Natural killer cell (primary cell): ENCODE measurements at regions of chrX and their contacts with region 1.

Region 1: GRCh38 chrX:65985922-65986588 is 53.8 kb downstream of the VSIG4 start:
- DNase-seq: peak; percentile 30 to 78
- ATAC-seq: peak; percentile 92 to 98 (median 96)
- H3K4me3 ChIP-seq: no peak overlapping the region
- H3K4me3 Mint-ChIP-seq: peak overlapping the region; percentile 9
- H3K27ac ChIP-seq: peak overlapping the region; percentile 80
- H3K27ac Mint-ChIP-seq: peak overlapping the region; percentile 87 to 88
- H3K4me1 ChIP-seq: peaks cover 12% of the 10 kb centered on the region
- H3K4me1 Mint-ChIP-seq: peaks cover 23 to 27% of the 10 kb centered on the region in 2 donors
- H3K27me3 ChIP-seq: no peaks in the 10 kb centered on the region
- H3K27me3 Mint-ChIP-seq: no peaks in the 10 kb centered on the region
- CTCF ChIP-seq: peak; percentile 35

Region 2: DNA sequence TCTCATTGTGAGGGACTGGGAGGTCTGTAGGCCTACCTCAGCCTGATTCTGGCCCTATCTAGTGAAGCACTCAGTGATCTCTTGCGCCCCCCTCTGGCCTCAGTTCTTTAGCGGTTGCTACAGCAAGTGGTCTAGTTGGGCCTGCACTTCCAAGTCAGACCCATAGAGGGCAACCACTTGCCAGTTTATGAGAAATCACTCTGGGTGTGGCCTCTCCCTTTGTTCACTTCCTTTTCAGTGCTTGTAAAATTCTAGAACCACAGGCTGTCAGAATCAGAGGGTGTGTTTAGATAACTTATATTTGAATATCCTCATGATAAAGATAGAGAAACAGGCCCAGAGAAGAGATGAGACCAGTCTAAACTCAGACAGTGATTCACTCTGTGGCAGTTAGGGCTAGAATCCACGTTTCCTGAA is 390.6 kb before region 1 on chrX:
- intact Hi-C with region 1: loop called (anchors 1 kb)
- DNase-seq: peak; percentile 82 to 94
- ATAC-seq: peak; percentile 80 to 97 (median 88)
- H3K4me3 ChIP-seq: no peak overlapping the region
- H3K4me3 Mint-ChIP-seq: peak overlapping the region; percentile 77
- H3K27ac ChIP-seq: peak overlapping the region; percentile 97
- H3K27ac Mint-ChIP-seq: peak overlapping the region; percentile 83 to 85
- H3K4me1 ChIP-seq: peaks cover 47% of the 10 kb centered on the region
- H3K4me1 Mint-ChIP-seq: peaks cover 37 to 48% of the 10 kb centered on the region in 2 donors
- H3K27me3 ChIP-seq: no peaks in the 10 kb centered on the region
- H3K27me3 Mint-ChIP-seq: no peaks in the 10 kb centered on the region
- CTCF ChIP-seq: peak; percentile 86

Region 3: DNA sequence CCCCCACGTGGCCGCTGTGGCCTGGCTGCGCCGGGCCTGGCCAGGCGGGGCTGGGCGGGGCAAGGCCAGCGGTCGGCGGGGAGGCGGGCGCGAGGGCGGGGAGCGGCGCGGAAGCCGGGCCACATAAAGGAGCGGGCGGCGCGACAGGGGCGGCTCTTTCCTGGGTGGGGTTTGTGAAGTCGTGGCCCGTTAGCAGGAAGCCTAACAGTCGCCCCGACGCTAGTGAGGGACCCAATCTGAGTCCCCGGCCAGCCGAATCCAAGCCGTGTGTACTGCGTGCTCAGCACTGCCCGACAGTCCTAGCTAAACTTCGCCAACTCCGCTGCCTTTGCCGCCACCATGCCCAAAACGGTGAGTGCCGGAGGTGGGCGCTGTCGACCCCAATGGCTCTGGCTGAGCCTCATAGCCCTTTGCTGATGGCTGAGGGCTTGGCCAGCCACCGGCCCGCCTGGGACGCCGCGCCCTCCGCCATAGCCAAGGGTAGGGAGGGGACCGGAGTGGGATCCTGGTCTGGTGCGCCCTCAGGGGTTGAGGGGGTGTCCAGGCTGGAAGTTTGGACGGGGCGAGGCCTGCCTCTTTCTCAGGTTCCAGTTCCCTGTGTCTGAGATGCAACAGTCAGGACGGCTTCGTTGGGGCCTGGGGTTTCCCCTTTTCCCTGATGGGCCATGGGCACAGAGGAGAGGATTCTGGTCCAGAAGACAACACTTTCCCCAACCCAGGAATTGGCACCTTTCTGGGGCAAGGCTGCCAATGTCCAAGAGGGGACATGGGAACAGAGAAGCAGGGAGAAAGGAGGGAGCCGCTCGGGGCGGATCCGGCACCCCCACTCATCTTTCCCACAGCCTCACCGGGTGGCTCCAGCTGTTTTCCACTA is 318.3 kb before region 1 on chrX and contains the start of gene MSN:
- intact Hi-C with region 1: loop called (anchors 2 kb)
- DNase-seq: peak; percentile 69 to 80
- ATAC-seq: peak; percentile 69 to 89 (median 86)
- H3K4me3 ChIP-seq: peak within 1 kb of the TSS; percentile 96
- H3K4me3 Mint-ChIP-seq: peak within 1 kb of the TSS; percentile 86
- H3K27ac ChIP-seq: peak within 1 kb of the TSS; percentile 88
- H3K27ac Mint-ChIP-seq: peak within 1 kb of the TSS; percentile 94 to 97
- H3K4me1 ChIP-seq: peaks cover 18% of the 10 kb centered on the region
- H3K4me1 Mint-ChIP-seq: peaks cover 56 to 75% of the 10 kb centered on the region in 2 donors
- H3K27me3 ChIP-seq: no peaks in the 10 kb centered on the region
- H3K27me3 Mint-ChIP-seq: no peaks in the 10 kb centered on the region
- CTCF ChIP-seq: no peak
- total RNA-seq, gene MSN: 866 to 1,028 (median 919) TPM

Region 4: DNA sequence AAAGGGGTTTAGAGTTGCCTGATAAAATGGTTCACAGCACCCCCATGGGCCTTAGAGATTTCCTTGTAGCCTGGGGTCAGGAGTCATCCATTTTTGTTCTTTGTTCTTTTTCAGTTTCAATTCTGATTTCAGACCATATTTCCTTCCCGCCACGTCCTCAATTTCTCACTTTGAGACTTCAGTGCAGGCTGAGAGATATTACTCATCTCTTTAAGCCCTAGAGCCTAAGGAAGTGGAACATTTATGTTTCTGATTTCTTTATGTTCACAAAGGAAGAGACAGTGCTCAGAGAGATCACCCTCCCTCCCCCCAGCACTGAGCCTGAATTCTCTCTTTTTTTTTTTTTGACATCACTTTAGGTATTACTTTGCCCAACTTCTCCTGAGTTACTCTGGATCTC is 262.3 kb before region 1 on chrX:
- intact Hi-C with region 1: loop called (anchors 10 kb)
- DNase-seq: peak in 1 of 2 donors; percentile 73
- ATAC-seq: peak; percentile 69 to 80 (median 77)
- H3K4me3 ChIP-seq: no peak overlapping the region
- H3K4me3 Mint-ChIP-seq: peak overlapping the region; percentile 80
- H3K27ac ChIP-seq: peak overlapping the region; percentile 82
- H3K27ac Mint-ChIP-seq: peak overlapping the region; percentile 76 to 79
- H3K4me1 ChIP-seq: peaks cover 59% of the 10 kb centered on the region
- H3K4me1 Mint-ChIP-seq: peaks cover 86 to 90% of the 10 kb centered on the region in 2 donors
- H3K27me3 ChIP-seq: no peaks in the 10 kb centered on the region
- H3K27me3 Mint-ChIP-seq: no peaks in the 10 kb centered on the region
- CTCF ChIP-seq: no peak

Region 5: GRCh38 chrX:65894133-65894532 is 91.9 kb before region 1 on chrX:
- intact Hi-C with region 1: loop called (anchors 10 kb)
- DNase-seq: peak in 1 of 2 donors; percentile 42
- ATAC-seq: peak in 2 of 3 donors; percentile 52 to 81
- H3K4me3 ChIP-seq: no peak overlapping the region
- H3K4me3 Mint-ChIP-seq: no peak overlapping the region
- H3K27ac ChIP-seq: no peak overlapping the region
- H3K27ac Mint-ChIP-seq: peak overlapping the region in 1 of 2 donors; percentile 72
- H3K4me1 ChIP-seq: peaks cover 12% of the 10 kb centered on the region
- H3K4me1 Mint-ChIP-seq: peaks cover 34 to 36% of the 10 kb centered on the region in 2 donors
- H3K27me3 ChIP-seq: no peaks in the 10 kb centered on the region
- H3K27me3 Mint-ChIP-seq: peaks cover 0 to 16% of the 10 kb centered on the region in 2 donors
- CTCF ChIP-seq: no peak

Region 6: GRCh38 chrX:65926095-65927019 is 59.7 kb before region 1 on chrX:
- intact Hi-C with region 1: loop called (anchors 10 kb)
- DNase-seq: peak in 1 of 2 donors; percentile 67
- ATAC-seq: peak; percentile 62 to 81 (median 73)
- H3K4me3 ChIP-seq: no peak overlapping the region
- H3K4me3 Mint-ChIP-seq: peak overlapping the region; percentile 77
- H3K27ac ChIP-seq: peak overlapping the region; percentile 61
- H3K27ac Mint-ChIP-seq: peak overlapping the region; percentile 63 to 88
- H3K4me1 ChIP-seq: peaks cover 27% of the 10 kb centered on the region
- H3K4me1 Mint-ChIP-seq: peaks cover 57 to 64% of the 10 kb centered on the region in 2 donors
- H3K27me3 ChIP-seq: no peaks in the 10 kb centered on the region
- H3K27me3 Mint-ChIP-seq: peaks cover 0 to 12% of the 10 kb centered on the region in 2 donors
- CTCF ChIP-seq: no peak

Region 7: GRCh38 chrX:66046612-66047235 is 60.7 kb after region 1 on chrX:
- intact Hi-C with region 1: loop called (anchors 1 kb)
- DNase-seq: peak in 1 of 2 donors; percentile 38
- ATAC-seq: peak; percentile 69 to 90 (median 82)
- H3K4me3 ChIP-seq: no peak overlapping the region
- H3K4me3 Mint-ChIP-seq: peak overlapping the region; percentile 53
- H3K27ac ChIP-seq: peak overlapping the region; percentile 86
- H3K27ac Mint-ChIP-seq: peak overlapping the region in 1 of 2 donors; percentile 95
- H3K4me1 ChIP-seq: peaks cover 15% of the 10 kb centered on the region
- H3K4me1 Mint-ChIP-seq: peaks cover 39 to 42% of the 10 kb centered on the region in 2 donors
- H3K27me3 ChIP-seq: no peaks in the 10 kb centered on the region
- H3K27me3 Mint-ChIP-seq: no peaks in the 10 kb centered on the region
- CTCF ChIP-seq: no peak